Right ventricle myocardium superior (tissue), 1 donor: ENCODE measurements at regions of chr2 and their contacts with region 1.

Region 1: DNA sequence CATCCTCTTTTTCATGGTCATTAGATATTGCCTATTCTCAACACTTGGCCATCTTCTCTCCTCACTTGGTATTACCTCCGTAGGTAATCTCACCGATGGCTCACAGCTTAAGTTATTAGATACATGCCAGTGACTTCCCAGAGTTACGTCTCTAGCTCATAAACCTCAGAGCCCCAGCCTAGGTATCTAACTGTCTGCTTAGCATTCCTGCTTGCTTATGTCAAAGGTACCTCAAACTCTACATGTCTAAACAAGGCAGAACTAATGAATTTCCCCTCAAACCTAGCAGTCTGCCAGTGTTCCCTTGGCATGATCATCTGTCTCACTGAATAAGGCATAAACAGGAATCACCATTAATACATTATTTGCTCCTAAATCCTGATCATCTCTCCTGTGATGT is 27.7 kb upstream of the ZNF638 start:
- DNase-seq: no peak
- ATAC-seq: no peak

Region 2: GRCh38 chr2:71510196-71510807 is 206.5 kb after region 1 on chr2:
- intact Hi-C with region 1: loop called (anchors 5 kb)
- DNase-seq: peak; percentile 80
- ATAC-seq: peak; percentile 76

Region 3: GRCh38 chr2:71603311-71603811 is 299.5 kb after region 1 on chr2:
- intact Hi-C with region 1: no loop called
- DNase-seq: peak; percentile 50
- ATAC-seq: peak; percentile 42